Activated naive CD4-positive, alpha-beta T cell treated with anti-CD3 and anti-CD28 coated beads for 36 hours (primary cell): ENCODE measurements at regions of chr7 and their contacts with region 1.

Region 1: DNA sequence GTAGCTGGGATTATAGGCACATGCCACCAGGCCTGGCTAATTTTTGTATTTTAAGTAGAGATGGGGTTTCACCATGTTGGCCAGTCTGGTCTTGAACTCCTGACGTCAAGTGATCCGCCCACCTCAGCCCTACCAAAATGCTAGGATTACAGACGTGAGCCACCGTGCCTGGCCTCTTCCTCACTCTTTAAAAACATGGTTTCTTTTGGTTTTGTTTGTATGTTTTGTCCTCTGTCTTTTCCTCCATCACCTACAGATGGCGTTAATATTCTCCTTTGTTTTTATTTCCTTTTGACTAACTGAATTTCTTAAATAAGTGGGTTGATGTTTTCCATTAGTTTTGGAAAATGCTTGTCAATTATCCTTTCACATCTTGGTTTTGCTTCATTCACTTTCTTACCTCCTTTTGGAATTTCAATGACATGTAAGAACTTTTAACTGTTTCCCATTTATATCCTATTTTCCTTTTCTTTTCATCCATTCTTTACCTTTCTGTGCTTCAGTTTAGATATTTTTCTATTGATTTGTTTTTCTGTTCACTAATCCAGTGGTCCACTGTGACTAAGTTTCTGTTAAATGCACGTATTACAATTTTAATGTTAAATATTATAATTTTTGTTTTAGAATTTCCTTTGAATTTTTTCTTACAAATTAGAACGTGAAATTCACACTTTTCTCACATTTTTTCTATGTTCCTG is 104.1 kb downstream of the ZNF467 start:
- DNase-seq: peak; percentile 34
- H3K4me3 Mint-ChIP-seq: no peak overlapping the region
- H3K27ac Mint-ChIP-seq: no peak overlapping the region
- H3K4me1 Mint-ChIP-seq: no peaks in the 10 kb centered on the region
- H3K27me3 Mint-ChIP-seq: peaks cover 29% of the 10 kb centered on the region

Region 2: DNA sequence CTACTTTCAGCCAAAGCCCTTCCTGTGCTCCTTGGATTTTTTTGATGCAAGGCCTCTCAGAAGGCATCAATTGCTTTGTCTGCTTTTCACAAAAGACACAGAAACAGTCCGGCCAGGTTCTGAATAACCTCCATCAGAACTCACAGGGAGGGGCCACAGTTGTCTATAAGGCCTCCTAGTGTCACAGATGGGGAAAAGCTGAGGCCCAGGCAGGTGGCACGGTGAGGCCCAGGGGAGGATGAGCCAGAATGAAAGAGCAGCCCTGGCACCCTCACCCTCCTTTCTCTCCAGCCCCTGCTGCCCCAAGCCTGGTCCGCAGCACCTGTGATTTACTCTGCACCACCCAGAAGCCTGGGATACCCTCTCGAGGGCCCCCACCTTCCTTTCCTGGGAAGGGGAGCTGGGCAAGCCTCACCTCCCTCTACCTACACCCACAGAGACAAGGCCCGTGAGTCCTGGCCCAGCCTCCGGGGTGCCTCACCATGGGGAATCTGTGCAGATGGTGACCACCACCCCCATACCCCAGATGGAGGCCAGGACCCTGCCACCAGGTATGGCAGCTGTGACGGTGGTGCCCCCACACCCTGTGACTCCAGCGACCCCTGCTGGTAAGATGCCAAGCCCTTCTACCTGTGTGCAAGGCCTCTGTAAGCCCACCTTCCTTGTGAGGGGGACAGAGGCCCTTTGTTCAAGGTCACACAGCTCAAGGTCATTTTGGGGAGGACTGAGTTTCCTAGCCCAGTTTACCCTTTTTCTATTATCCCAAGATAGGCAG is 130.3 kb after region 1 on chr7:
- CTCF ChIA-PET with region 1: interaction called, 3 read pairs
- intact Hi-C with region 1: loop called (anchors 2 kb)
- DNase-seq: peak; percentile 75
- H3K4me3 Mint-ChIP-seq: no peak overlapping the region
- H3K27ac Mint-ChIP-seq: no peak overlapping the region
- H3K4me1 Mint-ChIP-seq: no peaks in the 10 kb centered on the region
- H3K27me3 Mint-ChIP-seq: no peaks in the 10 kb centered on the region